CD4-positive, alpha-beta memory T cell (primary cell): ENCODE measurements at regions of chr10 and their contacts with region 1.

Region 1: GRCh38 chr10:91389636-91390512 is 20.3 kb upstream of the HECTD2 start:
- DNase-seq: peak; percentile 45 to 74 (median 69)
- H3K4me3 ChIP-seq: no peak overlapping the region
- H3K4me3 Mint-ChIP-seq: peak overlapping the region in 3 of 8 donors; percentile 9 to 55 (median 30)
- H3K27ac ChIP-seq: no peak overlapping the region
- H3K27ac Mint-ChIP-seq: no peak overlapping the region
- H3K4me1 ChIP-seq: peaks cover 4% of the 10 kb centered on the region
- H3K4me1 Mint-ChIP-seq: peaks cover 4 to 10% (median 5%) of the 10 kb centered on the region in 4 donors
- H3K27me3 ChIP-seq: no peaks in the 10 kb centered on the region
- H3K27me3 Mint-ChIP-seq: peaks cover 8 to 19% of the 10 kb centered on the region in 2 donors

Region 2: GRCh38 chr10:91378061-91378460 is 11.8 kb before region 1 on chr10:
- CTCF ChIA-PET with region 1: interaction called, 11 read pairs
- POLR2A ChIA-PET with region 1: interaction called, 3 read pairs
- intact Hi-C with region 1: loop called (anchors 1 kb)
- DNase-seq: peak; percentile 73 to 80 (median 74)
- H3K4me3 ChIP-seq: no peak overlapping the region
- H3K4me3 Mint-ChIP-seq: peak overlapping the region in 6 of 8 donors; percentile 2 to 45 (median 10)
- H3K27ac ChIP-seq: no peak overlapping the region
- H3K27ac Mint-ChIP-seq: peak overlapping the region in 2 of 7 donors; percentile 4 to 9
- H3K4me1 ChIP-seq: peaks cover 14% of the 10 kb centered on the region
- H3K4me1 Mint-ChIP-seq: peaks cover 14 to 34% (median 21%) of the 10 kb centered on the region in 4 donors
- H3K27me3 ChIP-seq: no peaks in the 10 kb centered on the region
- H3K27me3 Mint-ChIP-seq: peaks cover 0 to 2% of the 10 kb centered on the region in 2 donors

Region 3: DNA sequence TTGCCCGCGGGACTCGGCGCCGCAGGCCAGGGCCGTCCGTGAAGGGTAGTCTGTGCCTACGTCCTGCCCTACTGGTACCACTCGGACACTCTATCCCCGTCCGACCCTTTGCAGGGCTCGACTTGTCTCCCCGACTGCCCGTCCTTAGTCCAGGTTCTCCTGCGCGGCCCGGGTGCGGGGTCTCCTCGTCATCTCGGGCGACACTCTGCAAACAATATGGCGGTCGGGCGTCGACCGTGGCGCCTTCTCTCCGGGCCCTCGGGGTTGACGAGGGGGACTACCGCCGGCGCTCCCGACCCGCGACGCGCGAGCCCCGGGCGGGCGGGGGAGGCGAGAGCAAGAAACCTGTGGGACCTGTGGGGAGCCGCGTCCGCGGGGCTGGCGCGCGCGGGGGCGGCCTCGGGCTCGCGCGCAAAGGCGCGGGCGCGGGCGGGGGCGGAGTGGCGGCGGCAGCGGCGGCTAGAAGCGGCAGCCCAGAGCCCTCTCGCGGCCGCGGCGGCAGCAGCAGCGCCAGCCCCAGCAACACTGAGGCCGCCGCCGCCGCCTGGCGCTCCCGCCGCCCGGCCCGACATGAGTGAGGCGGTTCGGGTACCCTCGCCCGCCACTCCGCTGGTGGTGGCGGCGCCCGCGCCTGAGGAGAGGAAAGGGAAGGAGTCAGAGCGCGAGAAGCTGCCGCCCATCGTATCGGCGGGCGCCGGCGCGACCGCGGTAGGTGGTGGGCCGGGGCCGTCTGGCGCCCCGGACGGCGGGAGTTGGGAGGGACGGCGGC is 20.2 kb after region 1 on chr10 and contains the start of gene HECTD2:
- CTCF ChIA-PET with region 1: interaction called, 13 read pairs
- POLR2A ChIA-PET with region 1: interaction called, 3 read pairs
- intact Hi-C with region 1: loop called (anchors 1 kb)
- DNase-seq: peak; percentile 78 to 90 (median 88)
- H3K4me3 ChIP-seq: peak within 1 kb of the TSS; percentile 88 to 92
- H3K4me3 Mint-ChIP-seq: peak within 1 kb of the TSS; percentile 88 to 97 (median 91)
- H3K27ac ChIP-seq: peak within 1 kb of the TSS; percentile 74
- H3K27ac Mint-ChIP-seq: peak within 1 kb of the TSS; percentile 78 to 97 (median 95)
- H3K4me1 ChIP-seq: peaks cover 20% of the 10 kb centered on the region
- H3K4me1 Mint-ChIP-seq: peaks cover 7 to 15% (median 11%) of the 10 kb centered on the region in 4 donors
- H3K27me3 ChIP-seq: no peaks in the 10 kb centered on the region
- H3K27me3 Mint-ChIP-seq: peaks cover 0 to under 1% of the 10 kb centered on the region in 2 donors
- total RNA-seq, gene HECTD2: 2.6 to 2.7 TPM

Region 4: DNA sequence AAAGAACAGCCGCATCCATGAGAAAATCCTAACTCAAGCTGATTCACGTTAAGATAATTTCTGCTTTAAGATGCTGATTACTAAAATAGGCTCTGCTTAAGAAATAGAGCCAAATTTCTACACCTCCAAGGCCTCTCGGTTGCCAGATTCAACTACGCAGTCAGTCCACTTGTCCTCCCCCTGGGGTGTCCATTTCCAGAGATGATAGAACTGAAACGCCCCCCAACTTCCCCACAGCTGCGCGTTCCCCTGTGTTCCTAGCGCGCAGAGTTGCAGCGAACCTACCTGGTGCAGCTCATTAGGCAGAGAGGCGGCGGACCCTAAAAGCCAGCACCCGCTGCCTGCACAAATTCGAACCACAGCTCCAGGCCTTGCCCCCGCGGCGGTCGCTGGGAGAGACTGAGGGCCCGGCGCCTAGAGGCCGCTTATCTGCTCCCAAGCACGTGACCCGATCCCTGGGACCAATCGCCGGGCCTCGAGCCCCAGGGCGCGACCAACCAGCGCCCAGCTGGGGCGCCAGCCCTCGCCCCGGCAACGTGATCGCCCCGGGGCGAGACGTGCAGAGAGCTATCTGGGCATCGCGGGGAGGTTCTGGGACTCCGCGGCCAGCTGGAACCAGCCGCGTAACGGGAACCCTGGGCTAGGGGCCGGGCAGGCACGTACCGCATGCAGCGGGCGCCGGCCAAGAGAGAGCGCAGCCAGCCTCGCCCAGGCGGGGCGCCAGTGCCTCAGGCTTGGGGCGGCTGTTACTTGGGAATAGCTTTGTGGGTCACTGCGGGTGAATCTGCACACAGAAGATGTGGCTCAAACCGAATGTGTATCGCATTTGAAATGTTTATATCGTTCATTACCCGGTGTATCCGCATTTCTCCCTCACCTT is 243.0 kb after region 1 on chr10 and contains the start of gene PPP1R3C:
- CTCF ChIA-PET with region 1: interaction called, 18 read pairs
- POLR2A ChIA-PET with region 1: no interaction called
- intact Hi-C with region 1: no loop called
- DNase-seq: peak; percentile 9 to 42 (median 15)
- H3K4me3 ChIP-seq: peak within 1 kb of the TSS in 1 of 2 donors; percentile 12
- H3K4me3 Mint-ChIP-seq: peak within 1 kb of the TSS; percentile 44 to 75 (median 68)
- H3K27ac ChIP-seq: no peak within 1 kb of the TSS
- H3K27ac Mint-ChIP-seq: no peak within 1 kb of the TSS
- H3K4me1 ChIP-seq: peaks cover 4% of the 10 kb centered on the region
- H3K4me1 Mint-ChIP-seq: peaks cover 0 to 8% (median 5%) of the 10 kb centered on the region in 4 donors
- H3K27me3 ChIP-seq: peaks cover 25% of the 10 kb centered on the region
- H3K27me3 Mint-ChIP-seq: peaks cover 44 to 47% of the 10 kb centered on the region in 2 donors
- total RNA-seq, gene PPP1R3C: not detected

Region 5: DNA sequence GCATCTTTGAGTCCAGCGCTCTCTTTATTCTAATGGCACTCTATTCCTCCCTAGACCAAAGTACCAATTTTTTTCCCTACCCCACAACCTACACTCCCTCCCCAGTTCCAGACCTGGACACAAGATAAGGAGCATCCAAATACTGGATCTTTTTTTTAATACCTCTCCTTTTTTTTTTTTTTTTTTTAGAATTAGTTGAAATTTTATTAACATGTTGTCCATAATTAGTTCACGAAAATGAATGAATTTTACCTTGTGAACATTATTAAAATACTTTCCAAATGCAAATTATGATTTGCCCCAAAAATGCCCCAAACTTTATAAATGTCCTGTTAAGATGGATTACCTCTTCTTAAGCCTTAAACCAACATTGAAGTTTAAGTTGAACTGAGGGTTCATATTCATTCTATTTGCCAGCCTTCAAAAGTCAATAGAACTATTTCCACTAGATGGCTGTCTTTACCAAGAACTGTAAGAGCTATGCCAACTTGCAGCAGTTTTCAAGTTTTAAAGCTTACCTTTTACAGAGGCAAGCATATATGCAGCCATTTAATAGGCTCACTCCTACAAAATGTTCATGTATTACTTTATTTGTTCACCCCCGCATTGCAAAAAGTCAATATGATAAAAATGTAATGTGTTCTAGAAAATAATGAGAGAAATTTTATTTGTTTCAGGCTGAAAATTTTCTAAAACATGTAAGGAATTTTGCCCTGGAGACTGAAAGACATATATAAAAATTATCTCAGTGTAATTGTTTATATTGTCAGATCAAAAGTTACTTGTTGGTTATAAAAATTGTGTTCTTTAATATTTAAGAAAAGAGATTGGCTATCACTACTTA is 368.7 kb after region 1 on chr10:
- CTCF ChIA-PET with region 1: interaction called, 3 read pairs
- POLR2A ChIA-PET with region 1: no interaction called
- intact Hi-C with region 1: loop called (anchors 2 kb)
- DNase-seq: peak in 4 of 5 donors; percentile 49 to 62 (median 55)
- H3K4me3 ChIP-seq: no peak overlapping the region
- H3K4me3 Mint-ChIP-seq: no peak overlapping the region
- H3K27ac ChIP-seq: no peak overlapping the region
- H3K27ac Mint-ChIP-seq: no peak overlapping the region
- H3K4me1 ChIP-seq: no peaks in the 10 kb centered on the region
- H3K4me1 Mint-ChIP-seq: peaks cover 0 to 2% (median 0%) of the 10 kb centered on the region in 4 donors
- H3K27me3 ChIP-seq: no peaks in the 10 kb centered on the region
- H3K27me3 Mint-ChIP-seq: peaks cover 11% of the 10 kb centered on the region in 2 donors